HepG2 (cell line): ENCODE measurements at regions of chr6 and their contacts with region 1.

Region 1: DNA sequence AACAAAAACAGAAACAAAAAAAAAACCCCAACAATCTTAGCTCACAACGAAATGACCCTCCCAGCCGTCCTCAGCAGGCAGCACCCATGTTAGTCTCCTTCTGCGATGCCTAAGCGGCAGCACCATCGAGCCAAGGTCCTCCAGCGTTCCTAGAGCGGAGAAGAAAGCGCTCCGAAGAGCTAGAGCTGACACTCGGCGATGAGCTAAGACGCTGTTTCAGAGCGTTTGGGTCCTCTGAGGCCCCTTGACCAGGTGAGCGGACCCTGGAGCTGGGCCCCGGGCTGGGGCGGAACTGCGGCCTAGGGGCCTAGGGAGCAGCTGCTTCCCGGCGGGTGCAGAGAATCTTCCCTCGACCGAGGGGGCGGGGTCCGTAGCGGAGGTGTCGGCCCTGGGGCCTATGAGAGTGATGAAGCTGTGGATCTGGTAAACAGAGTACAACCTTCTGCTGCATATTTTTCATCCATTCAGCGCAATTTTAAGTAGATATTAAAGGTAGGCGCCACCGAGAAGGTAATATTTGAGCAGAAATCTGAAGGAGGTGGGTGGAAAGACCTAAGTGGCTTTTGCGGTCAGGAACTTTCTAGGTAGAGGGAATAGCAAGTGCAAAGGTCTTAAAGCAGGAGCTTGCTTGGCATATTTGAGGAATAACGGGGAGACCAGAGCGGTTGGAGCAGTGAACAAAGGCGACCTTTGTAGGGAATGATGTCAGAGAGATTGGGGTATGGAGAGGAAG is at the start of gene ZSCAN26:
- DNase-seq: peak; percentile 83
- ATAC-seq: peak; percentile 99
- H3K4me3 ChIP-seq: peak within 1 kb of the TSS; percentile 85 to 91 (median 87)
- H3K27ac ChIP-seq: peak within 1 kb of the TSS; percentile 51
- H3K4me1 ChIP-seq: peaks cover 26% of the 10 kb centered on the region
- H3K27me3 ChIP-seq: peaks cover 0 to 11% of the 10 kb centered on the region in 2 experiments; a peak in 3 of 5 replicates
- CTCF ChIP-seq: peak; percentile 22; the same call in 1 of the 2 replicates
- EP300 ChIP-seq: peak; percentile 3 to 44; a peak in 1 of 4 replicates
- POLR2A ChIP-seq: peak; percentile 79 to 81
- RAD21 ChIP-seq: no peak; the same call in 1 of the 2 replicates
- total RNA-seq, gene ZSCAN26: 15.6 and 18.5 TPM in 2 replicates

Region 2: GRCh38 chr6:28124102-28124970 is 142.8 kb before region 1 on chr6 and contains the start of gene ZSCAN16:
- CTCF ChIA-PET with region 1: no interaction called
- POLR2A ChIA-PET with region 1: interaction called, 10 read pairs
- in situ Hi-C with region 1: no loop called
- intact Hi-C with region 1: loop called (anchors 1 kb)
- DNase-seq: peak; percentile 87
- ATAC-seq: peak; percentile 100
- H3K4me3 ChIP-seq: peak within 1 kb of the TSS; percentile 81 to 89 (median 86)
- H3K27ac ChIP-seq: peak within 1 kb of the TSS; percentile 60
- H3K4me1 ChIP-seq: peaks cover 24% of the 10 kb centered on the region
- H3K27me3 ChIP-seq: no peaks in the 10 kb centered on the region; a peak in 1 of 5 replicates
- CTCF ChIP-seq: peak; percentile 21; the same call in 1 of the 2 replicates
- EP300 ChIP-seq: no peak
- POLR2A ChIP-seq: peak; percentile 89
- RAD21 ChIP-seq: no peak; the same call in none of the 2 replicates
- total RNA-seq, gene ZSCAN16: 12.7 and 13.4 TPM in 2 replicates

Region 3: DNA sequence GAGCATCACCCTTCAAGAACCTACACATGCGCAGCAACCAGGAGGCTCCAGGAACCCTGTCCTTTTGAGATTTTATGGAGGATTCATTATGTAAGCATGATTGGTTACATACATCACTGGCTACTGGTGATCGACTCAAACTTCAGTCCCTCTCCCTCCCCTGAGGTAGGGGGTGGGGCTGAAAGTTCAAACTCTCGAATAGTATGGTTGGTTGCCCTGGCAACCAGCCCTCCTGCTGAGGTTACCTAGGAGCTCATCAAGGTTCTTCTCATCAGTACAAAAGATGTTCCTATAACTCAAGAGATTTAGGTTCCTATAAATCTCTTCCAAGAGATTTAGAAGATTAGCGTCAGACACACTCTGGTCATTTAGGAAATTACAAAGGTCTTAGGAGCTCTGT is 63.9 kb before region 1 on chr6:
- CTCF ChIA-PET with region 1: no interaction called
- POLR2A ChIA-PET with region 1: no interaction called
- in situ Hi-C with region 1: no loop called
- intact Hi-C with region 1: no loop called
- DNase-seq: no peak
- ATAC-seq: no peak
- H3K4me3 ChIP-seq: no peak overlapping the region
- H3K27ac ChIP-seq: no peak overlapping the region
- H3K4me1 ChIP-seq: peaks cover 13% of the 10 kb centered on the region
- H3K27me3 ChIP-seq: peaks cover 8 to 27% of the 10 kb centered on the region in 2 experiments
- CTCF ChIP-seq: no peak
- EP300 ChIP-seq: no peak
- POLR2A ChIP-seq: no peak
- RAD21 ChIP-seq: no peak

Region 4: DNA sequence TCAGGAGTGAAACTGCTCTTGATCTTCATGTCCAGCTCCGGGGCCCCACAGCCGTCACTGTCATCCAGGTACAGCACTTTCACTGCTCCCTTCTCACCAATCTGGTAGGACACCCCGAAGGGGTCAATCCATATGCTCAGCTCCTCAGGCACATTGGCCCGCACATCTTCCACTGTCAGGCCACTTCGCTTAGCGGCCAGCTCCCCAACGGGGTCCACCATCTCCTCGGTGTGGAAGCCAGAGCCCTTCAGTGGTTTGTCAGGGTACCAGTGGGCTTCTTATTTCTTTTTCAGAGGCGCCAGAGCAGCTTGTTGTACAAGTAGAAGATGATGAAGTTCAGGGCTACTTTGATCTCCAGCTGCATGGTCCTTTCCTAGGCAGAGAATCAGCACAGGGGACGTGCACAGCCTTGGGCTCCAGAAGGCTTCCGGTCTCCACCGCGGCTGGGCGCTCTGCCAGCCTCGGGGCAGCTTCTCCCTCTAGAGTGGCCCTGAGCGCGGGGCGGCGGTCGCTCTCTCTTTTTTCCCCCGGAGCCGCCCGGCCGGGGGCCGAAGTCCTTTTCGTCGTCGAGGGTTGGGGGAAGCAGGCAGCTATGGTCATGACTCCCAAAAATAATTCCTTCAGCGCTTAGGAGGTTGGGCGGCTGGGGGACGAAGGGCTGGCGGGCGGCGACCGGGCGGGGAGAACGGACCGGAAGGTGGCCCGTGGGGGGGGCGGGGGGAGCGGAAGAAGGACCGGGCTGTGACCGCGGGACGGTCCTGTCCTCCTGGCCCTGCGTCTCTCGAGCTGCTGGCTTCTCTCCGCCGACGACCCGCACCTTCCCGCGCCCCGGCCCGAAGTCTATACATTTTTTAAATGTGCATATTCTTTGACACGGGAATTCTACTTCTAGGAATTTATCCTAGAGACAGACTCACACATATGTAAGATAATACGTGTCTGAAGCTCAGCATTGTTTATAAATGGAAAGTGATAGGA is 48.6 kb before region 1 on chr6:
- CTCF ChIA-PET with region 1: no interaction called
- POLR2A ChIA-PET with region 1: interaction called, 18 read pairs
- in situ Hi-C with region 1: no loop called
- intact Hi-C with region 1: no loop called
- DNase-seq: peak; percentile 70
- ATAC-seq: peak; percentile 93
- H3K4me3 ChIP-seq: peak overlapping the region; percentile 53 to 77 (median 56)
- H3K27ac ChIP-seq: peak overlapping the region; percentile 79
- H3K4me1 ChIP-seq: peaks cover 55% of the 10 kb centered on the region
- H3K27me3 ChIP-seq: no peaks in the 10 kb centered on the region; a peak in 1 of 5 replicates
- CTCF ChIP-seq: peak; percentile 49
- EP300 ChIP-seq: no peak
- POLR2A ChIP-seq: peak; percentile 42 to 77; a peak in 2 of 4 replicates
- RAD21 ChIP-seq: peak; percentile 50

Region 5: DNA sequence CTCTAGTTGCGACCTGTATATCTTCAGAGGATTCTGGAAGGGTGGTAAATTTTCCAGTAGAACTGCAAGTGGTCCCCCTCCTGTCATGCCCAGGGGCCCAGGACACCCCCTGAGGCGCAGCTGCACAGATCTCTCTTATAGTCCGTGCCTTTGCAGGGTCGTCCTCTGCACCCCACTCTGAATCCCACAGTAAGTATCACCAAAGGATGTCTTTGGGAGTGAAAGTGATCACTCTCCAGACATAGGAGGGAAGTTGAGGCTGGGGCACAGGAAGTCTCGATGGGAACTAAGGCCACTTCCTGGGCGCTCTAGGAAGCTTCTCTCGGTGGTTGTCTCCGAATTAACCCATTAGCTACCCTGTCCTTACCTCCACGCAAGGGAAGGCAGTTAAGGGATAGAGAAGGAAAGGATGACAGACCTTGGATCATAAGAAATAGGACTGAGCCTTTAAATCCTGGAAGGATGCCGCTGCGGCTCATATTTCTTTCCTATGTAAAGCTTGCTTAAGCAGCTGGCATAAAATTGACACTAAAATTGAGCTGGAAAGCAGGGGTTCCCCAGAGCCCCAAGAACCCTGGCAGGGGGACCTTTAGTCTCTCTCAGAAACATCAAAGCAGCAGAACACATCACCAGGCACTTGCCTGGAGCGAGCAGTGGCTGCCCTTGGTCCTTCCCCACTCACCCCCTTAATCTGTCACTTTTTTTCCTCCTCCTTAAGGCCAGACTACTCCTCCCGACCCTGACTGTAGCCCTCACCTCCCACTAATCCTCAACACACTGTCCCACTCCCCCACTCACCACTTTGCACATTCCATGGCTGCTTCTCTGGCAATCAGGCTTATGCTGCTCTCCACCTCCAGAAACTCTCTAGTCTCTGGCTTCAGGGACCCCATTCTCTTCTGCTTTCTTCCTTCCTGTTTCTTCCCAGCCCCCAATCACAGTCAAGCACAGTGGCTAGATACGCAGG is 14.8 kb before region 1 on chr6 and contains the start of gene ZKSCAN4:
- CTCF ChIA-PET with region 1: no interaction called
- POLR2A ChIA-PET with region 1: interaction called, 67 read pairs
- in situ Hi-C with region 1: no loop called
- intact Hi-C with region 1: loop called (anchors 1 kb)
- DNase-seq: peak; percentile 88
- ATAC-seq: peak; percentile 94
- H3K4me3 ChIP-seq: peak within 1 kb of the TSS; percentile 85 to 98 (median 97)
- H3K27ac ChIP-seq: peak within 1 kb of the TSS; percentile 30
- H3K4me1 ChIP-seq: peaks cover 27% of the 10 kb centered on the region
- H3K27me3 ChIP-seq: no peaks in the 10 kb centered on the region; a peak in 1 of 5 replicates
- CTCF ChIP-seq: no peak
- EP300 ChIP-seq: peak in 1 of 2 experiments; percentile 56; a peak in 1 of 4 replicates
- POLR2A ChIP-seq: peak; percentile 42 to 74; a peak in 3 of 4 replicates
- RAD21 ChIP-seq: no peak; the same call in 1 of the 2 replicates
- total RNA-seq, gene ZKSCAN4: 7.8 and 10.2 TPM in 2 replicates

Region 6: GRCh38 chr6:28322661-28323060 is 55.5 kb after region 1 on chr6:
- CTCF ChIA-PET with region 1: no interaction called
- POLR2A ChIA-PET with region 1: interaction called, 17 read pairs
- in situ Hi-C with region 1: no loop called
- intact Hi-C with region 1: loop called (anchors 5 kb)
- DNase-seq: peak; percentile 62
- ATAC-seq: peak; percentile 12; the same call in 1 of the 3 replicates
- H3K4me3 ChIP-seq: no peak overlapping the region
- H3K27ac ChIP-seq: no peak overlapping the region
- H3K4me1 ChIP-seq: peaks cover 36% of the 10 kb centered on the region
- H3K27me3 ChIP-seq: no peaks in the 10 kb centered on the region
- CTCF ChIP-seq: no peak
- EP300 ChIP-seq: peak in 1 of 2 experiments; percentile 59; a peak in 2 of 4 replicates
- POLR2A ChIP-seq: no peak
- RAD21 ChIP-seq: no peak

Region 7: GRCh38 chr6:28349892-28350737 is 83.0 kb after region 1 on chr6 and contains the start of gene ZKSCAN3:
- CTCF ChIA-PET with region 1: no interaction called
- POLR2A ChIA-PET with region 1: interaction called, 18 read pairs
- in situ Hi-C with region 1: no loop called
- intact Hi-C with region 1: no loop called
- DNase-seq: peak; percentile 84
- ATAC-seq: peak; percentile 97
- H3K4me3 ChIP-seq: peak within 1 kb of the TSS; percentile 63 to 98 (median 85)
- H3K27ac ChIP-seq: peak within 1 kb of the TSS; percentile 77
- H3K4me1 ChIP-seq: peaks cover 32% of the 10 kb centered on the region
- H3K27me3 ChIP-seq: no peaks in the 10 kb centered on the region; a peak in 1 of 5 replicates
- CTCF ChIP-seq: 0 out of 2 replicates have a peak, but pooled peaks have one; percentile 19
- EP300 ChIP-seq: no peak
- POLR2A ChIP-seq: peak; percentile 81 to 88
- RAD21 ChIP-seq: peak; percentile 27; the same call in 1 of the 2 replicates
- total RNA-seq, gene ZKSCAN3: 7.4 and 8.1 TPM in 2 replicates

Region 8: DNA sequence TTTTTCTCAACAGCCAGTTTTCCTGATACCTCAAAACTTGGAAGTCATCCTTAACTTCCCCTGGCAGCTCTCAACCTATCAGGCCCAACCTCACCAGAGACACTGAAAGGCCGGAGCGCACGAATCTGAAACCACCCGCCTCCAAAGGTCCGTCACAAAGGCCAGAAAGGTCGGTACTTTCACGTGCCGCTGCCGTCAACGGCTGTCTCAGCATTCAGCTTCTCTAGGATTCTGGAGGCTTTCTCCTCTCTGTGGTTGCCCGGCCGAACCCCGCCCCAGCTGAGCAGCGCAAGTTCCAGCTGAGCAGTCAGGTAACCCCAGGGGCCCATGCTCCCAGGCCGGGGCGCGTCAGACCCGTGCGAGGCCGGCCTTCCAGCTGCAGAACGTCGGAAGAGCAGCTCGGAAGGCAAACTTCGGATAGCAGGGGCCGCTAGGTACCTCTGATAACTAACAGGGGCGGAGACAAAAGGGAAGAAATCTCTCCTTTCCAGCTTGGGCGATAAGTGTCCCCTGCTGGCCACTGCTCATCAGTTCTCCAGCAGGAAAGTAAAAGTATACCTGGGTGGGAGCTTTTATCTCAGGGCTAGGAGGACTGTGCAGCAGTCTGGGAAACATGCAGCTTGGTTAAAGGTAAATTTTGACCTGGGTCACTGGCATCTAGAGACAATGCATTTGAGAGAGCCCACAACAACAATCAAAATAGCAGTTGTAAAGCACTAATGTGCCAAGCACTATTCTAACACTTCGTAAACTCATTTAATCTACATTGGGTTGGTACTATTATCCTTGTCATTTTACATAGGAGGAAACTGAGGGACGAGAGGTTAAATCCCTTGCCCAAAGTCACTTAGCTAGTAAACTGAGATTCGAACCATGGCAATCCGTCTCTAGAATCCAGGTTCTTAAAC is 116.4 kb after region 1 on chr6:
- CTCF ChIA-PET with region 1: no interaction called
- POLR2A ChIA-PET with region 1: interaction called, 12 read pairs
- in situ Hi-C with region 1: no loop called
- intact Hi-C with region 1: no loop called
- DNase-seq: peak; percentile 93
- ATAC-seq: peak; percentile 98
- H3K4me3 ChIP-seq: peak overlapping the region; percentile 59 to 74 (median 72)
- H3K27ac ChIP-seq: peak overlapping the region; percentile 56
- H3K4me1 ChIP-seq: peaks cover 39% of the 10 kb centered on the region
- H3K27me3 ChIP-seq: no peaks in the 10 kb centered on the region
- CTCF ChIP-seq: peak; percentile 72
- EP300 ChIP-seq: peak in 1 of 2 experiments; percentile 35; a peak in 2 of 4 replicates
- POLR2A ChIP-seq: peak; percentile 41 to 70; a peak in 2 of 4 replicates
- RAD21 ChIP-seq: peak; percentile 75